ENCODE measurements at regions of chr11 and their contacts with region 1.

Region 1: GRCh38 chr11:117796872-117797529 is at the start of gene DSCAML1:
- DNase-seq: no peak
- H3K4me3 ChIP-seq: no peak within 1 kb of the TSS
- H3K4me3 Mint-ChIP-seq: peak within 1 kb of the TSS; percentile 27 to 87
- H3K27ac ChIP-seq: no peak within 1 kb of the TSS
- H3K27ac Mint-ChIP-seq: peak within 1 kb of the TSS in 1 of 7 donors; percentile 7
- H3K4me1 ChIP-seq: peaks cover 0 to 4% of the 10 kb centered on the region in 2 donors
- H3K4me1 Mint-ChIP-seq: peaks cover 3% of the 10 kb centered on the region
- H3K27me3 ChIP-seq: peaks cover 55 to 84% of the 10 kb centered on the region in 2 donors
- H3K27me3 Mint-ChIP-seq: peaks cover 72 to 88% (median 77%) of the 10 kb centered on the region in 3 donors
- CTCF ChIP-seq: no peak
- polyA plus RNA-seq, gene DSCAML1: not detected

Region 2: DNA sequence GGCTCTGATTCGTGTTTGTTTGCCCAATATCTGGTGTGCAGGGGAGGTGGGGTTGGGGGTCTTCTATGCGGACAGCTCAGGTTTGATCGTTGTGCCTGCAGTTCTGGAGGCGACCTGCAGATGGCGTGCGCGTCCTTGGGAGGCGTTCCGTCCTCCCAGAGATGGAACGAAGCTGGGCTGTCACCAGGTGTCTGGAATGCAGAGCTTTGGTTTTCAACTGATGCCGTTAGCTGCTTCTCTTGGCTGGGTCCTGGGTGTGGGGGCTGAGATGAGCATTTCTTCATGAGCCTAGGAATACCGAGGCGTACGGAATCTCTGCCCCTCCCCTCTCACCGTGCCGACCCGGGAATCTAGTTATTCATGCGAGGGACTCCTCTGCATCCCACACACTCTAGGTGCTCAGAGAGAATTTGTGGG is 370.7 kb before region 1 on chr11:
- intact Hi-C with region 1: loop called in 1 of 2 experiments (anchors 5 kb)
- DNase-seq: peak; percentile 30 to 52 (median 44)
- H3K4me3 ChIP-seq: no peak overlapping the region
- H3K4me3 Mint-ChIP-seq: no peak overlapping the region
- H3K27ac ChIP-seq: no peak overlapping the region
- H3K27ac Mint-ChIP-seq: no peak overlapping the region
- H3K4me1 ChIP-seq: no peaks in the 10 kb centered on the region
- H3K4me1 Mint-ChIP-seq: peaks cover 1% of the 10 kb centered on the region
- H3K27me3 ChIP-seq: no peaks in the 10 kb centered on the region
- H3K27me3 Mint-ChIP-seq: peaks cover 3 to 14% (median 5%) of the 10 kb centered on the region in 3 donors
- CTCF ChIP-seq: peak; percentile 96

Region 3: DNA sequence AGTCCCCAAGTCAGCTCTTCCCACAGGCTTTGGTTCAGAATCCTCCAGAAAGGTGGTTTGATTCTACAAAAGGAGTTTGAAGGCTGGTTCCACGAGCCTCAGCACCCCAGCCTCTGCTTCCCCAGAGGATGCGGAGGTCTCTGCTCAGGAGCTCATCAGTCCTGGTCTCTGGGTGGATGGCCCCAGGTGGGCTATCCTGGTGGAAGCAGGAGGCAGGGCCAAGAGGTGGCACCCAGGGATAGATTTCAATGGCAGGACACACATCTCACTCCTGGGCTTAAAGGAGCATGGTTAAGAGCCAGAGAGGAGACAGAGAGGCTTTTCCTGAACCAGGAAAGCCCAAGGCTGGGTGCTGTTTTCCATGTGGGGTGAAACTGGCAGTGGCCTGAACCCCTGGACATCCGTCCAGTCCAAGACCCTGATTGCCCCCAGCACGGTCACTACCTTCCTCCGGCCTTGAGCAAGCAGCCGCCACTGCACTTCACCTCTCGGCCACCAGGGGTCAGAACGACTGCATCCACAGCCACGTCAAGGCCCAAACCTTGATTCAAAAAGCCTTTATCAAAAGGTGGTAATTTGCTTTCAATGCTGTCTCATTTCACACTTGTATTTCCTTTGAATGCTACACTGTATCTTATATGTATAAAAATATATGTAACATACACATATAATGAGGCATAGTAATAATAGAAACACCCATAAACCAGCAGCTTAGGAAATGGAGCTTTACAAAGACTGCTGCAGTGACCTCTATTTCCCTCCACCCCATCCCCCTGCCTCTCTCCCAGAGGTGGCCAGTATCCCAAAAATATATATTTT is 46.9 kb after region 1 on chr11:
- intact Hi-C with region 1: no loop called
- DNase-seq: peak; percentile 69 to 81 (median 70)
- H3K4me3 ChIP-seq: no peak overlapping the region
- H3K4me3 Mint-ChIP-seq: peak overlapping the region in 1 of 2 donors; percentile 35
- H3K27ac ChIP-seq: peak overlapping the region in 1 of 2 donors; percentile 99
- H3K27ac Mint-ChIP-seq: peak overlapping the region; percentile 89 to 100 (median 99)
- H3K4me1 ChIP-seq: peaks cover 51 to 52% of the 10 kb centered on the region in 2 donors
- H3K4me1 Mint-ChIP-seq: peaks cover 51% of the 10 kb centered on the region
- H3K27me3 ChIP-seq: no peaks in the 10 kb centered on the region
- H3K27me3 Mint-ChIP-seq: peaks cover 0 to 2% (median 0%) of the 10 kb centered on the region in 3 donors
- CTCF ChIP-seq: peak; percentile 99